Activated naive CD4-positive, alpha-beta T cell treated with anti-CD3 and anti-CD28 coated beads for 36 hours (primary cell): ENCODE measurements at regions of chr2 and their contacts with region 1.

Region 1: DNA sequence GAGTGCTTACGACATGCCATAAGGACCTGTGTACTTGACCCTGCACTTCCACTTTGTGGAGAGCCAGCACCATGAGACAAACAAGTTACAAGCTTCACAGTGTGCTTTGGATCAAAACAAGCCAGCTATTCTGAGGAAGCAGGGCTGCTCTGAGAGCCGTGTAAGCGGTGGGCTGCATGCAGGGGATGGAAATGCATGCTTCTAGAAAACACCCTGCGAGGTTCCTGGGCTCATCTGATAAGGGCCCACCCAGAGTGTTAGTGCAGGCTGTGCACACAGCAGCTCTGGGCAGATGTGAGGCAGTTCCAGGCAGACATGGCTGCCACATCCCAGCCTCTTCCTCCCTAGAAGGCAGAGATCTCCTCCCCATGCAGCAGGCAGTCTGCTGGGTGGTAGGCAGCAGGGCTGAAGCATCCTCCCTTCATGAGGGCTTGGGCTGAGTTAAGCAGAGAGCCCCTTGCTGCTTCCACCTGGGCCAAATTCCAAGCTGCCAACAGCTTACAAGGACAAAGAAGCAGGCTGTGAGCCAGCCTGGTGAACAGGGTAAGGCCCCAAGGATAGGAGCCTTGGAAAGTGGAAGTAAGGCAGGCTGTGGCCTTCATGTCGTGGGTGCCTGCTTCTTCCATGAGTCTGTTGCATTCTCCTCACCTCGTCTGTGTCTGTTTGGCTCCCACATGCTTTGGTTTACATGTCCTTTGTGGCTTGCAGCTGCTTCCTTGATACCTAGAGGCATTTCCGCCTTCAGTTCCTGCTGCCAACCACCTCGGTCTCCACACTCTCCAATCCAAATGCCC is 7.7 kb downstream of the PSD4 start:
- DNase-seq: no peak
- H3K4me3 Mint-ChIP-seq: no peak overlapping the region
- H3K27ac Mint-ChIP-seq: peak overlapping the region; percentile 77
- H3K4me1 Mint-ChIP-seq: peaks cover 86% of the 10 kb centered on the region
- H3K27me3 Mint-ChIP-seq: no peaks in the 10 kb centered on the region

Region 2: DNA sequence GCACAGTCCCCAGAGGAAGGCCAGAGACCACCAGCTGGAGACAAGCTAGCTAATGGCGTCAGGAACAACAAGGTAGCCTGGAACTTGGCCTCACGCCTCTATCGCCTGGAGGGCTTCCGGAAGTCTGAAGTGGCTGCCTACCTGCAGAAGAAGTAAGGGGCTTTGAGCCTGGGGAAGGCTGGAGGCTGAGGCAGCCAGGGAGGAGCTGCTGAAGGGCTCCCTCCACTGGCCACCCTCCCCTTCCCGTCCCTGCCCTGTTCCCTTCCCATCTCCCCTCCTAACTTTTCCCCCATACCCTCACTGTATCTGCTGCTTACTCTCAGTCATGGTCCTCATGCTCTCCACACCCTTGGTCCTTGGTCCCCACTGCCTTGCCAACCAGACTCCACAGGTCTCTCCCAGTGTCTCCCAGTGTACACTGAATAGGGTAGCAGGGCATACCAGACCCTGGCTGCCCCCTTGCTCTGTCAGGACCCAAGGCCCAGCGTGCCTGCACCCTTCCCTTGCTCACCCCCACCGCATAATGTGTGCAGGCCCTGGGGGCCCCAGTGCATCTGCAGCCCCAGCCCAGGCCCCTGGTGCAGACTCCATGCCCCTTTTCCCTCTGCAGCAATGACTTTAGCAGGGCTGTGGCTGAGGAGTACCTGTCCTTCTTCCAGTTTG is 11.1 kb after region 1 on chr2:
- CTCF ChIA-PET with region 1: interaction called, 4 read pairs
- intact Hi-C with region 1: loop called (anchors 1 kb)
- DNase-seq: no peak
- H3K4me3 Mint-ChIP-seq: no peak overlapping the region
- H3K27ac Mint-ChIP-seq: no peak overlapping the region
- H3K4me1 Mint-ChIP-seq: peaks cover 42% of the 10 kb centered on the region
- H3K27me3 Mint-ChIP-seq: no peaks in the 10 kb centered on the region

Region 3: GRCh38 chr2:113198790-113199612 is 17.5 kb after region 1 on chr2:
- CTCF ChIA-PET with region 1: interaction called, 21 read pairs
- intact Hi-C with region 1: no loop called
- DNase-seq: peak; percentile 81
- H3K4me3 Mint-ChIP-seq: no peak overlapping the region
- H3K27ac Mint-ChIP-seq: peak overlapping the region; percentile 16
- H3K4me1 Mint-ChIP-seq: peaks cover 23% of the 10 kb centered on the region
- H3K27me3 Mint-ChIP-seq: no peaks in the 10 kb centered on the region

Region 4: GRCh38 chr2:113361051-113361450 is 179.6 kb after region 1 on chr2:
- CTCF ChIA-PET with region 1: no interaction called
- intact Hi-C with region 1: no loop called
- DNase-seq: no peak
- H3K4me3 Mint-ChIP-seq: no peak overlapping the region
- H3K27ac Mint-ChIP-seq: no peak overlapping the region
- H3K4me1 Mint-ChIP-seq: peaks cover 8% of the 10 kb centered on the region
- H3K27me3 Mint-ChIP-seq: no peaks in the 10 kb centered on the region